H1 (cell line): ENCODE measurements at regions of chr10 and their contacts with region 1.

Region 1: DNA sequence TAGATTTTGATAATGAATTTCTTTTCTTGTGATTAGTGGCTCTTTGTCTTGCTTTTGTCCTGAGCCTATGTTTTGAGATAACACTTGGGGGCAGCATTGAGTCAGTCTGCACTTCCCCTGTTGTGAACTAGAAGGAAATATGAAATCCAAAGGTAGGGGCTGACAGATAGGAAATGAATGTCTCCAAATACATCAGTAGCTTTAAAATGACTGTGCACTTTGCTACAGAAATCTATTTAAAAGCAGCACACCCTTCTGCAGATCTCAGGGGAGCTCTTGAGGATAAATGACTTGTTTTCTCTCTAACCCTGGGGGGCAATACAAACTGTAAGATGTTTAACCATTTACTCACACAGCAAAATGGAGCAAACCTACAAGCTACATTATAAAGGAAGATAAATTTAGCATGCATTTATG is 176.0 kb upstream of the MYO3A start:
- DNase-seq: no peak
- H3K4me3 ChIP-seq: no peak overlapping the region
- H3K27ac ChIP-seq: no peak overlapping the region
- H3K4me1 ChIP-seq: peaks cover 0 to 5% (median 2%) of the 10 kb centered on the region in 4 experiments; a peak in 3 of 7 replicates
- H3K27me3 ChIP-seq: no peaks in the 10 kb centered on the region
- CTCF ChIP-seq: peak in 2 of 3 experiments; percentile 72; a peak in 3 of 4 replicates
- EP300 ChIP-seq: no peak
- POLR2A ChIP-seq: no peak
- RAD21 ChIP-seq: peak; percentile 88

Region 2: DNA sequence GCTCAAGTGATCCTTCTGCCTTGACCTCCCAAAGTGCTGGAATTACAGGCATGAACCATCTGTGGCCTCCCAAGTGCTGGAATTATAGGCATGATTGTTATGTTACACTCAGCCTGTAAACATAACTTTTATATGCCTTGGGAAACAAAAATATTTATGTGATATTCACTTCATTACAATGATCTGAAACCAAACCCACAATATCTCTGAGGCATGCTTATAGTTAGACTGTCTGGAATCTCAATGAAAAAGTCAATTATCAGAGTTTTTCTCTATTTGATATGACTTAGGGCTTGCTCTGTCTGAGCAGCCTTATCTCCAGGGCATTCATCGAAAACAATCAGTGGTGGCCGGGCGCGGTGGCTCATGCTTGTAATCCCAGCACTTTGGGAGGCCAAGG is 19.3 kb before region 1 on chr10:
- CTCF ChIA-PET with region 1: interaction called, 10 read pairs
- POLR2A ChIA-PET with region 1: no interaction called
- DNase-seq: no peak
- H3K4me3 ChIP-seq: no peak overlapping the region
- H3K27ac ChIP-seq: no peak overlapping the region
- H3K4me1 ChIP-seq: no peaks in the 10 kb centered on the region
- H3K27me3 ChIP-seq: no peaks in the 10 kb centered on the region
- CTCF ChIP-seq: no peak
- EP300 ChIP-seq: no peak
- POLR2A ChIP-seq: no peak
- RAD21 ChIP-seq: no peak

Region 3: GRCh38 chr10:25747084-25747483 is 11.0 kb before region 1 on chr10:
- CTCF ChIA-PET with region 1: interaction called, 18 read pairs
- POLR2A ChIA-PET with region 1: no interaction called
- DNase-seq: no peak
- H3K4me3 ChIP-seq: no peak overlapping the region
- H3K27ac ChIP-seq: no peak overlapping the region
- H3K4me1 ChIP-seq: peaks cover 0 to 3% (median 0%) of the 10 kb centered on the region in 4 experiments; a peak in 2 of 7 replicates
- H3K27me3 ChIP-seq: no peaks in the 10 kb centered on the region
- CTCF ChIP-seq: no peak
- EP300 ChIP-seq: no peak
- POLR2A ChIP-seq: no peak
- RAD21 ChIP-seq: no peak

Region 4: DNA sequence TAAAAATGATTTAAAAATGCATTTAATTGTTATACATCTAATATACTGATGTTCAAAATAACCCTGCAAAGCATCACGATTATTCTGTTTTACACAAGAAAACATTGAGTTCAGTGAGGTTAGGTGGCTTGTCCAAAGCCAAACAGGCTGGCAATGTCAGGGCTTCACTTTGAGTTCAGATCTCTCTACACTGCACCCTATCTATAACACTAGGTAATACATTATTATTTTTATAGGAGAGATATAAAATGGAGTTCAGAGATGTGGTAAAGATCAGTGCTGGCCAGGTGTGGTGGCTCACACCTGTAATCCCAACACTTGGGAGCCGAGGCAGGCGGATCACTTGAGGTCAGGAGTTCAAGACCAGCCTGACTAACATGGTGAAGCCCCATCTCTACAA is 10.1 kb after region 1 on chr10:
- CTCF ChIA-PET with region 1: interaction called, 10 read pairs
- POLR2A ChIA-PET with region 1: interaction called, 3 read pairs
- DNase-seq: no peak
- H3K4me3 ChIP-seq: no peak overlapping the region
- H3K27ac ChIP-seq: no peak overlapping the region
- H3K4me1 ChIP-seq: peaks cover 0 to 19% (median 11%) of the 10 kb centered on the region in 4 experiments; a peak in 4 of 7 replicates
- H3K27me3 ChIP-seq: peaks cover 0 to 4% (median 0%) of the 10 kb centered on the region in 4 experiments; a peak in 1 of 7 replicates
- CTCF ChIP-seq: no peak; a peak in 1 of 4 replicates
- EP300 ChIP-seq: no peak
- POLR2A ChIP-seq: no peak
- RAD21 ChIP-seq: no peak

Region 5: DNA sequence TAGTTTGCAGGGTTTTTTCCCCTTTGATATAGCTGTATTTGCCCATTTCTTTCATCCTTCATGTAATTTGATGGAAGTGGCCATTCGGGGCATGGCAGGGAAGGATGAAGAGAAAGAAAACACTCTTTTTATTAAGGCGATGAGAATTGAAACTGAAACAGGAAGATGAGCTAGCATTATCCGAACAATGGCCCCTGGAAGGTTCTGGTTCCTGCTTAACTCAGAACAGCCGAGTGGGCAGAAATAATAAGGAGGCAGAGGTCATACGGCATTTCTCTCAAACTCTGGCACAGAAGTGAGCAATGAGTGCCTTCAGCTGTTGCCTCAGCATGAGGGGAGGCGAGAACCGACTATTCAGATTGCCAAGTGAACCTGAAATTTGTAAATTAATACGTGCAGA is 62.8 kb after region 1 on chr10:
- CTCF ChIA-PET with region 1: interaction called, 16 read pairs
- POLR2A ChIA-PET with region 1: no interaction called
- DNase-seq: no peak
- H3K4me3 ChIP-seq: no peak overlapping the region
- H3K27ac ChIP-seq: no peak overlapping the region
- H3K4me1 ChIP-seq: peaks cover 0 to 6% (median 1%) of the 10 kb centered on the region in 4 experiments; a peak in 4 of 7 replicates
- H3K27me3 ChIP-seq: no peaks in the 10 kb centered on the region
- CTCF ChIP-seq: no peak
- EP300 ChIP-seq: no peak
- POLR2A ChIP-seq: no peak
- RAD21 ChIP-seq: no peak

Region 6: DNA sequence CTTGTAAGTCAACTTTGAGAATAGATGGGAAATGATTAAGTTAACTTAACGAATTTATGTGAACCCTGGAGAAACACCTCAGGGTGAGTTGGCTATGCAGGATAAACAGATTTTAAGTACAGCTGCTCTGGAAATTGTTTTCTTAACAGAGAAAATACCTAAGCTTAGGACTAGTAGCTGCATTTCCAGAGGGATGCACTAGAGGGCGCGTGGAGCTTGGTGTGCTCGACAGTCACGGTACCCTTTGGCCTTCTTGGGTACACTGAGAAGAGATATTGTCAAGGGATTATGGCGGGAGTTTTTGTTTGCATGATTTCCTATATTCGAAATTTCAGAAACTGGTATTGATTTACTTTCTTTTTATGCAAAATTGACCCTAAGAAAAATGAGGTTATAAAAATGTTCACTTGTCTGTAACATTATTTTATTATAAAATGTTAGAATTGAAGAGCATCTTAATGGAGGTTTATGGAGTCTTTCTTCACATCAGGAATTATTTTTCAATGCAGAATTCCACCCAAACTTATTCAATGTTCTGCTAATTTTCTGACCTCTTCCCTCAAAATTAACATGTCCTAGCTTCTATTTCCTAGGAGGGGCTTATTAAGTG is 117.6 kb after region 1 on chr10:
- CTCF ChIA-PET with region 1: interaction called, 27 read pairs
- POLR2A ChIA-PET with region 1: no interaction called
- DNase-seq: peak; percentile 38 to 89
- H3K4me3 ChIP-seq: no peak overlapping the region
- H3K27ac ChIP-seq: no peak overlapping the region
- H3K4me1 ChIP-seq: peaks cover 0 to 2% (median 0%) of the 10 kb centered on the region in 4 experiments; a peak in 1 of 7 replicates
- H3K27me3 ChIP-seq: no peaks in the 10 kb centered on the region
- CTCF ChIP-seq: peak; percentile 83 to 88 (median 84)
- EP300 ChIP-seq: no peak
- POLR2A ChIP-seq: no peak
- RAD21 ChIP-seq: peak; percentile 95 to 96

Region 7: GRCh38 chr10:26269754-26270153 is 511.7 kb after region 1 on chr10:
- CTCF ChIA-PET with region 1: interaction called, 11 read pairs
- POLR2A ChIA-PET with region 1: no interaction called
- DNase-seq: no peak
- H3K4me3 ChIP-seq: no peak overlapping the region
- H3K27ac ChIP-seq: no peak overlapping the region
- H3K4me1 ChIP-seq: peaks cover 0 to 2% (median under 1%) of the 10 kb centered on the region in 4 experiments; a peak in 3 of 7 replicates
- H3K27me3 ChIP-seq: no peaks in the 10 kb centered on the region
- CTCF ChIP-seq: peak in 2 of 3 experiments; percentile 63 to 79; a peak in 3 of 4 replicates
- EP300 ChIP-seq: no peak
- POLR2A ChIP-seq: no peak
- RAD21 ChIP-seq: peak; percentile 88 to 91